ENCODE measurements at regions of chr17 and their contacts with region 1.

Region 1: GRCh38 chr17:50161023-50161910 is 4.5 kb upstream of the SGCA start:
- DNase-seq: peak; percentile 93
- H3K4me3 ChIP-seq: peak overlapping the region; percentile 28 to 63 (median 39)
- H3K27ac ChIP-seq: no peak overlapping the region
- H3K4me1 ChIP-seq: peaks cover 6% of the 10 kb centered on the region
- H3K27me3 ChIP-seq: peaks cover 0 to 2% of the 10 kb centered on the region in 2 experiments
- CTCF ChIP-seq: peak; percentile 95 to 97
- POLR2A ChIP-seq: peak; percentile 22

Region 2: GRCh38 chr17:50026901-50027630 is 134.2 kb before region 1 on chr17:
- CTCF ChIA-PET with region 1: no interaction called
- POLR2A ChIA-PET with region 1: no interaction called
- dilution Hi-C with region 1: no loop called
- intact Hi-C with region 1: no loop called
- DNase-seq: peak; percentile 83
- H3K4me3 ChIP-seq: peak overlapping the region in 1 of 3 experiments; percentile 6
- H3K27ac ChIP-seq: peak overlapping the region; percentile 62
- H3K4me1 ChIP-seq: peaks cover 20% of the 10 kb centered on the region
- H3K27me3 ChIP-seq: no peaks in the 10 kb centered on the region
- CTCF ChIP-seq: peak; percentile 90 to 94
- POLR2A ChIP-seq: no peak

Region 3: DNA sequence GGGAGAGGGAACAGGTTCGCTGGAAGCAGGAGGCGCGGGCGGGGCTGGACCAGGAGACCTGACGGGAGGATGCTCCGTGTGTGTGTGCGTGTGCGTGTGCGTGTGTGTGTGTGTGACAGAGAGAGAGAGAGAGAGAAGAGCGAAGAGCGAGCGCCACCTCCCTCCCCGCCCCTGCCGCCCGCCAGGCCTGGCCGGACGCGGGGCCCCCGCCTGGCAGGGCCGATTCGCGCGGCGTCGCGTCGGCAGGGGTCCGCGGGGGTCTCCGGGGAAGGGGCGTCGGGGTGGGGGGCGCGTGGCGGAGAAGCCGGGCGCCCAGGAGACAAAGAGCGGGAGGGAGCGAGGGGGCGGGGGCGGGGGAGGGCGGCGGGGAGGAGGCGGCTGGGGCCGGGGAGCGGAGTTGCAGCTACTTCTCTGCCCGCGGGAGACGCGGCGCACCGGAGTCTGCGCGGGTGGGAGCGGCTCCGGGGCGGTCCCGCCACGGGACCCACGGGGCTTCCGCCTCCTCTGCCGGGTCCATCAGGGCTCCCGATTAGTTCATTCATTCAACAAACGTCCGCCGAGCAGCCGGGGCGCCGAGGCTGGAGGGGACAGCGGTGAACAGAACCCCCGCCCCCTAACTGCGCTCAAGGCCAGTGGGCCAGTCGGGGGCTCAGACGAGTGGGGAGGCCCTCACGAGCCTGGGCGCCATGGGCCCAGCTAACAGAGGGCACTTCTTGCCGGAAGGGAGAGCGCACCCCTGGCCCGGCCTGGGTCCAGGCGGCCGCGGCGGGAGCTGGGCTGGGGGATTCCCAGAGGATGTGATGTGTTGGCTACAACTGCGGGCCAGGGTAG is 31.3 kb before region 1 on chr17 and contains the start of gene SAMD14:
- CTCF ChIA-PET with region 1: interaction called, 11 read pairs
- POLR2A ChIA-PET with region 1: no interaction called
- dilution Hi-C with region 1: no loop called
- intact Hi-C with region 1: no loop called
- DNase-seq: peak; percentile 53
- H3K4me3 ChIP-seq: peak within 1 kb of the TSS; percentile 22 to 53 (median 31)
- H3K27ac ChIP-seq: peak within 1 kb of the TSS; percentile 56
- H3K4me1 ChIP-seq: peaks cover 21% of the 10 kb centered on the region
- H3K27me3 ChIP-seq: no peaks in the 10 kb centered on the region
- CTCF ChIP-seq: no peak
- POLR2A ChIP-seq: no peak
- total RNA-seq, gene SAMD14: 15.6 and 16.1 TPM in 2 replicates

Region 4: GRCh38 chr17:50177983-50178834 is 16.9 kb after region 1 on chr17:
- CTCF ChIA-PET with region 1: interaction called, 17 read pairs
- POLR2A ChIA-PET with region 1: no interaction called
- dilution Hi-C with region 1: no loop called
- intact Hi-C with region 1: no loop called
- DNase-seq: peak; percentile 84
- H3K4me3 ChIP-seq: no peak overlapping the region
- H3K27ac ChIP-seq: peak overlapping the region; percentile 73
- H3K4me1 ChIP-seq: peaks cover 16% of the 10 kb centered on the region
- H3K27me3 ChIP-seq: no peaks in the 10 kb centered on the region
- CTCF ChIP-seq: peak; percentile 54 to 72
- POLR2A ChIP-seq: peak; percentile 71

Region 5: GRCh38 chr17:50189550-50190292 is 28.5 kb after region 1 on chr17:
- CTCF ChIA-PET with region 1: no interaction called
- POLR2A ChIA-PET with region 1: no interaction called
- dilution Hi-C with region 1: no loop called
- intact Hi-C with region 1: no loop called
- DNase-seq: no peak
- H3K4me3 ChIP-seq: no peak overlapping the region
- H3K27ac ChIP-seq: no peak overlapping the region
- H3K4me1 ChIP-seq: no peaks in the 10 kb centered on the region
- H3K27me3 ChIP-seq: no peaks in the 10 kb centered on the region
- CTCF ChIP-seq: no peak
- POLR2A ChIP-seq: no peak

Region 6: GRCh38 chr17:50218771-50219315 is 57.6 kb after region 1 on chr17:
- CTCF ChIA-PET with region 1: no interaction called
- POLR2A ChIA-PET with region 1: no interaction called
- dilution Hi-C with region 1: no loop called
- intact Hi-C with region 1: no loop called
- DNase-seq: no peak
- H3K4me3 ChIP-seq: no peak overlapping the region
- H3K27ac ChIP-seq: no peak overlapping the region
- H3K4me1 ChIP-seq: no peaks in the 10 kb centered on the region
- H3K27me3 ChIP-seq: peaks cover 24 to 42% of the 10 kb centered on the region in 2 experiments
- CTCF ChIP-seq: no peak
- POLR2A ChIP-seq: no peak

Region 7: DNA sequence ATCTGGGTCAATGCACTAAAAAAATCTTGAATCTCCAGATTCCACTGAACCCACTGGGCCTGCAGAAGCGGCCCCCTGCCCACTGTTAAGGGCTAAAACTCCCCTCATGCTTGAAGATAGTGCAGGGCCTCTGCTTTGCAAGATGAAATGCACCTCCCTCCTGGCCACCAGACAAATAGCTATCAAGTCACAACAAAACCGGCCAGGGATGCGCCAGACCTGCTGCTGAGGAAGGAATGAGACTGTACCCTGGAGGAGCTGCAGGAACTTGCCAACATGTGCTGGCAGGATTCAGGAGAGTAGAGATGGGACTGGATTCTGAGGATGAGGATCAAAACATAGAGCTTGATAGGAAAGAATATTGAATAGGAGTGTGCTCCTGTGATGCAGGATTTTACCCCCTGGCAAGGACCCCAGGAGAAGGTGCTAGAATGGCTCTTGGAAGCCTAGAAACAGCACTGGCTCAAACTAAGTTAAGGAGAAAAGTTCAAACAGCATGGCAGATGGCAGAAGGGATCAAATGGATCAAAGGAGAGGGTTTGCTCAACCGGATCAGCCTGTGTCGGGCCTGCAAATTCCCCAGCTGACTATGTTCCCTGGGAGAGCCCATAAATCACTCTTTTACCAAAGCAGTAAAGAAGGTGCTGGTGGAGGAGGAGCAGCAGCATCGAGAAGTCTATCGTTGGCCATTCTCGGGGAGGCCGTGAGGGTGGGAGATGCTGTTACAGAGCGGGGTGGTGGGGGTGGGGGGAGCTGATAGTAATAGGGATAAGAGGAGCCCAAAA is 157.4 kb after region 1 on chr17:
- CTCF ChIA-PET with region 1: no interaction called
- POLR2A ChIA-PET with region 1: no interaction called
- dilution Hi-C with region 1: no loop called
- intact Hi-C with region 1: no loop called
- DNase-seq: no peak
- H3K4me3 ChIP-seq: no peak overlapping the region
- H3K27ac ChIP-seq: no peak overlapping the region
- H3K4me1 ChIP-seq: no peaks in the 10 kb centered on the region
- H3K27me3 ChIP-seq: peaks cover 21 to 26% of the 10 kb centered on the region in 2 experiments
- CTCF ChIP-seq: no peak
- POLR2A ChIP-seq: no peak